CD8-positive, alpha-beta T cell (primary cell): ENCODE measurements at regions of chr19 and their contacts with region 1.

Region 1: GRCh38 chr19:12564016-12564664 is 12.9 kb upstream of the ZNF564 start:
- DNase-seq: peak; percentile 83 to 96 (median 91)
- ATAC-seq: peak; percentile 100
- H3K4me3 ChIP-seq: no peak overlapping the region
- H3K4me3 Mint-ChIP-seq: no peak overlapping the region
- H3K27ac ChIP-seq: no peak overlapping the region
- H3K27ac Mint-ChIP-seq: no peak overlapping the region
- H3K4me1 ChIP-seq: no peaks in the 10 kb centered on the region
- H3K4me1 Mint-ChIP-seq: peaks cover 5% of the 10 kb centered on the region
- H3K27me3 ChIP-seq: no peaks in the 10 kb centered on the region
- H3K27me3 Mint-ChIP-seq: no peaks in the 10 kb centered on the region
- CTCF ChIP-seq: peak; percentile 91

Region 2: GRCh38 chr19:12495002-12495802 is 68.9 kb before region 1 on chr19:
- CTCF ChIA-PET with region 1: interaction called, 3 read pairs
- POLR2A ChIA-PET with region 1: no interaction called
- intact Hi-C with region 1: loop called in 1 of 2 experiments (anchors 1 kb)
- DNase-seq: peak; percentile 81 to 96 (median 93)
- ATAC-seq: peak; percentile 99
- H3K4me3 ChIP-seq: peak overlapping the region; percentile 53 to 64
- H3K4me3 Mint-ChIP-seq: peak overlapping the region; percentile 91
- H3K27ac ChIP-seq: peak overlapping the region; percentile 68 to 79
- H3K27ac Mint-ChIP-seq: peak overlapping the region; percentile 94
- H3K4me1 ChIP-seq: peaks cover 8% of the 10 kb centered on the region
- H3K4me1 Mint-ChIP-seq: peaks cover 18% of the 10 kb centered on the region
- H3K27me3 ChIP-seq: no peaks in the 10 kb centered on the region
- H3K27me3 Mint-ChIP-seq: no peaks in the 10 kb centered on the region
- CTCF ChIP-seq: peak; percentile 55

Region 3: DNA sequence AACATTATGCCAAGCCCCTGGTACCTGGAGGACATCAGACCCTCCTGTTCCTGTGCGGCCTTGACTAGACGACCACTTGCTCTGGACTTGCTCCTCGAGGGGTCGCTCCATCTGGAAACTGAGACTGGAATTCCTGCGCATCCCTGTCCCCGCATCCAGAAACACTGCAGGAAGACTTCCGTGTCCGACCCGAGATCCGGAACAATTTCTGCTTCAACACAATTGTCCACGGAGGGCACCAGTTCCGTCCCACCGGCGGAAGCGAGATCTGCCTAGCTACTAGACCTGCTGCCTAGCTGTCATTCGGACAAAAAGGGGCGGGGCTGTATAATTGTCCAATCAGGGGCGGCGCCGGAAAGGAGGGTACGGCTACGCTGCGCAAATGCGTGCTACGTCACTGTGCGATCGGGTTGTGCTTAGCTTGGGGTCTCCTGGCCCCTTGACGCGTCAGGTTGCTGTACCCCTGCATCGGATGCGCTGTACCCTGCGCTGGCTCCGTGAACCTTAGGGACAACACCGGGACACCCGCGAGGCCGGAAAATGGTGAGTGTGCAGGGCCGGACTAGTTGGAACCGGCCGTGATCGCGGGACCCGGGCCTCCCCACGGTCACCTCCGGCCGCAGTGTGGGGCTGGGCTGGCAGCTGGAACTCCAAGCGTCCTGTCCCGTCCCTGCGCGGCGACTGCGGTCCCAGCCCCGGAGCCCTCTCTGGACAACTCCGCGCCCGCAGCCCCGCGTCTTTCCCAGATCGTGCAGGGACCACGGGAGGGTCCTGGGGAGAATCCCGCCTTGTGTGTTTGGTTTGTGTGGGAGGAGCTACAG is 46.6 kb after region 1 on chr19 and contains the starts of genes ZNF490 and ZNF791:
- CTCF ChIA-PET with region 1: interaction called, 6 read pairs
- POLR2A ChIA-PET with region 1: interaction called, 3 read pairs
- intact Hi-C with region 1: loop called in 1 of 2 experiments (anchors 1 kb)
- DNase-seq: peak; percentile 93 to 98 (median 96)
- ATAC-seq: peak; percentile 86
- H3K4me3 ChIP-seq: peak within 1 kb of the TSS; percentile 83 to 85
- H3K4me3 Mint-ChIP-seq: peak within 1 kb of the TSS; percentile 100
- H3K27ac ChIP-seq: peak within 1 kb of the TSS; percentile 87 to 90
- H3K27ac Mint-ChIP-seq: peak within 1 kb of the TSS; percentile 100
- H3K4me1 ChIP-seq: peaks cover 44% of the 10 kb centered on the region
- H3K4me1 Mint-ChIP-seq: peaks cover 47% of the 10 kb centered on the region
- H3K27me3 ChIP-seq: no peaks in the 10 kb centered on the region
- H3K27me3 Mint-ChIP-seq: no peaks in the 10 kb centered on the region
- CTCF ChIP-seq: no peak
- total RNA-seq, gene ZNF490: 5.1 to 7.0 TPM
- total RNA-seq, gene ZNF791: 61.0 to 67.0 TPM

Region 4: GRCh38 chr19:12666265-12667048 is 102.3 kb after region 1 on chr19 and contains the starts of genes MAN2B1 and WDR83:
- CTCF ChIA-PET with region 1: interaction called, 151 read pairs
- POLR2A ChIA-PET with region 1: interaction called, 3 read pairs
- intact Hi-C with region 1: no loop called
- DNase-seq: peak; percentile 57 to 92 (median 77)
- ATAC-seq: peak; percentile 72
- H3K4me3 ChIP-seq: peak within 1 kb of the TSS; percentile 82 to 84
- H3K4me3 Mint-ChIP-seq: peak within 1 kb of the TSS; percentile 90
- H3K27ac ChIP-seq: peak within 1 kb of the TSS; percentile 69 to 99
- H3K27ac Mint-ChIP-seq: peak within 1 kb of the TSS; percentile 94
- H3K4me1 ChIP-seq: peaks cover 46% of the 10 kb centered on the region
- H3K4me1 Mint-ChIP-seq: peaks cover 54% of the 10 kb centered on the region
- H3K27me3 ChIP-seq: no peaks in the 10 kb centered on the region
- H3K27me3 Mint-ChIP-seq: no peaks in the 10 kb centered on the region
- CTCF ChIP-seq: no peak
- total RNA-seq, gene MAN2B1: 74.8 to 82.2 TPM
- total RNA-seq, gene WDR83: 7.4 to 10.0 TPM

Region 5: GRCh38 chr19:12681074-12681951 is 117.2 kb after region 1 on chr19 and contains the start of gene DHPS:
- CTCF ChIA-PET with region 1: interaction called, 27 read pairs
- POLR2A ChIA-PET with region 1: no interaction called
- intact Hi-C with region 1: no loop called
- DNase-seq: peak; percentile 81 to 99 (median 90)
- ATAC-seq: peak; percentile 74
- H3K4me3 ChIP-seq: peak within 1 kb of the TSS; percentile 83 to 96
- H3K4me3 Mint-ChIP-seq: peak within 1 kb of the TSS; percentile 96
- H3K27ac ChIP-seq: peak within 1 kb of the TSS; percentile 82 to 97
- H3K27ac Mint-ChIP-seq: peak within 1 kb of the TSS; percentile 92
- H3K4me1 ChIP-seq: peaks cover 19% of the 10 kb centered on the region
- H3K4me1 Mint-ChIP-seq: peaks cover 29% of the 10 kb centered on the region
- H3K27me3 ChIP-seq: no peaks in the 10 kb centered on the region
- H3K27me3 Mint-ChIP-seq: no peaks in the 10 kb centered on the region
- CTCF ChIP-seq: no peak
- total RNA-seq, gene DHPS: 98.7 to 100 TPM

Region 6: DNA sequence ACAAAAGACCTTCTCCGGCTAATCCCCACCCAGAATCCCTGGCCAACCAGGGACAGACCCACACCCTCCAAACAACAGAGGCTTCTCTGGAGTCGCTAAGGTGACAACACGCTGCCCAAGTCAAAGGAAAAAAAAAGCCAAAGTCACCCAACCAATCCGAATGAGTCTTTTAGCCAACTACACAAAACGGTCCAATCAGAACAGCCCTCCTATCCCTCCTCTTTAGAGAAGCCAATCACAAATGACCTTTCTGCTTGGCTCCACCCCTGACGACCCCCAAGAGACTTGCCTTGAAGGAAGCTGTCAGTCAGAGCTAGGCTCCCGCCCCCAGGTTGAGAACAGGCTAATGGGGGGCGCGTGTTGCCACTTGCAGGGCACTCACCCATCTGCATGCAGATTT is 138.9 kb after region 1 on chr19:
- CTCF ChIA-PET with region 1: no interaction called
- POLR2A ChIA-PET with region 1: no interaction called
- intact Hi-C with region 1: no loop called
- DNase-seq: peak in 2 of 9 experiments; percentile 47
- ATAC-seq: peak; percentile 66
- H3K4me3 ChIP-seq: no peak overlapping the region
- H3K4me3 Mint-ChIP-seq: no peak overlapping the region
- H3K27ac ChIP-seq: no peak overlapping the region
- H3K27ac Mint-ChIP-seq: no peak overlapping the region
- H3K4me1 ChIP-seq: no peaks in the 10 kb centered on the region
- H3K4me1 Mint-ChIP-seq: peaks cover 2% of the 10 kb centered on the region
- H3K27me3 ChIP-seq: no peaks in the 10 kb centered on the region
- H3K27me3 Mint-ChIP-seq: no peaks in the 10 kb centered on the region
- CTCF ChIP-seq: no peak

Region 7: GRCh38 chr19:12769689-12770088 is 205.5 kb after region 1 on chr19:
- CTCF ChIA-PET with region 1: no interaction called
- POLR2A ChIA-PET with region 1: no interaction called
- intact Hi-C with region 1: no loop called
- DNase-seq: peak in 6 of 9 experiments; percentile 31 to 75 (median 62)
- ATAC-seq: peak; percentile 93
- H3K4me3 ChIP-seq: no peak overlapping the region
- H3K4me3 Mint-ChIP-seq: peak overlapping the region; percentile 18
- H3K27ac ChIP-seq: no peak overlapping the region
- H3K27ac Mint-ChIP-seq: no peak overlapping the region
- H3K4me1 ChIP-seq: peaks cover 2% of the 10 kb centered on the region
- H3K4me1 Mint-ChIP-seq: peaks cover 6% of the 10 kb centered on the region
- H3K27me3 ChIP-seq: no peaks in the 10 kb centered on the region
- H3K27me3 Mint-ChIP-seq: no peaks in the 10 kb centered on the region
- CTCF ChIP-seq: no peak

Region 8: GRCh38 chr19:12796146-12797071 is 232.3 kb after region 1 on chr19:
- CTCF ChIA-PET with region 1: interaction called, 3 read pairs
- POLR2A ChIA-PET with region 1: interaction called, 4 read pairs
- intact Hi-C with region 1: loop called in 1 of 2 experiments (anchors 1 kb)
- DNase-seq: peak; percentile 46 to 88 (median 78)
- ATAC-seq: peak; percentile 6
- H3K4me3 ChIP-seq: peak overlapping the region; percentile 5 to 25
- H3K4me3 Mint-ChIP-seq: peak overlapping the region; percentile 70
- H3K27ac ChIP-seq: peak overlapping the region in 1 of 2 experiments; percentile 36
- H3K27ac Mint-ChIP-seq: peak overlapping the region; percentile 89
- H3K4me1 ChIP-seq: peaks cover 36% of the 10 kb centered on the region
- H3K4me1 Mint-ChIP-seq: peaks cover 38% of the 10 kb centered on the region
- H3K27me3 ChIP-seq: no peaks in the 10 kb centered on the region
- H3K27me3 Mint-ChIP-seq: no peaks in the 10 kb centered on the region
- CTCF ChIP-seq: peak; percentile 86